Activated CD4-positive, alpha-beta T cell treated with anti-CD3 and anti-CD28 coated beads, Interleukin-2, amount 10 ng/mL, durations not matched to agents 24 days and 14 days (primary cell): ENCODE measurements at regions of chr10 and their contacts with region 1.

Region 1: DNA sequence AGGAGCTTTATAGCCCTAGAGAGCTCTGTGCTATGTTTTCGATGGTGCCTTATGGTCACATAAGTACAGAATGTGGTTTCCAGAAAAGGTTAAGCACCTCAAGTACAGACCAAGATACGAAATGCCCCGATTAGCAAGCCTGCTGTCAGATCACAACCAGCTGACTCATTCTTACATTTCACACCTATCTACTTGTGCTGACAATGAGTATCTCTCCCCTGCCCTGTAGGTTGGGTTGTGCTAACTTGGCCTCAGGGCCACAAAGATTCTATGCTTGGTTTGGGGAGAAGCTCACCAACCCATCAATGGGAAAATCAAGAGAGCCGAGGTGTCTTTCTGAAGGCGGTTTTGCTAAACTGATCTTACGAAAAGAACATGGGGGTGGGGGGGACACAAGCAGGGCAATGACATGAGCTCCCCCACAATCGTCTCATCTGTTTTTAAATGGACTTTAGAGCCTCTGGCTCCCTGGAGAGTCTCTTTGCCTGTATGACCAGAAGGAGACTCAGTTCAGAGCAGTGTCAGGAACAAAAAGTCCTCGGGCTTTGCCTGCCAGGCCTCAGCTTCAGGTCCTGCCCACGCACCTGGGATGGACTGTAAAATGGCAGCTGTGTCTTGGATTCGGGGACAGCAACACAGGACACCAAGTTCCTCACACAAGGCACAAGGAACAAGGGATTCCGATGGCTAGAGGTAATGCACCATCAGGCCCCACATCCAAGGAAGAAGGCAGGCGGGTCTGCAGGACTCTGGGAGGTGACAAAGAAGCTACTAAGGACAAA is 55.1 kb downstream of the FAM53B start:
- DNase-seq: peak; percentile 86
- H3K4me3 Mint-ChIP-seq: peak overlapping the region; percentile 66
- H3K27ac Mint-ChIP-seq: peak overlapping the region; percentile 91
- H3K4me1 Mint-ChIP-seq: peaks cover 58% of the 10 kb centered on the region
- H3K27me3 Mint-ChIP-seq: no peaks in the 10 kb centered on the region

Region 2: DNA sequence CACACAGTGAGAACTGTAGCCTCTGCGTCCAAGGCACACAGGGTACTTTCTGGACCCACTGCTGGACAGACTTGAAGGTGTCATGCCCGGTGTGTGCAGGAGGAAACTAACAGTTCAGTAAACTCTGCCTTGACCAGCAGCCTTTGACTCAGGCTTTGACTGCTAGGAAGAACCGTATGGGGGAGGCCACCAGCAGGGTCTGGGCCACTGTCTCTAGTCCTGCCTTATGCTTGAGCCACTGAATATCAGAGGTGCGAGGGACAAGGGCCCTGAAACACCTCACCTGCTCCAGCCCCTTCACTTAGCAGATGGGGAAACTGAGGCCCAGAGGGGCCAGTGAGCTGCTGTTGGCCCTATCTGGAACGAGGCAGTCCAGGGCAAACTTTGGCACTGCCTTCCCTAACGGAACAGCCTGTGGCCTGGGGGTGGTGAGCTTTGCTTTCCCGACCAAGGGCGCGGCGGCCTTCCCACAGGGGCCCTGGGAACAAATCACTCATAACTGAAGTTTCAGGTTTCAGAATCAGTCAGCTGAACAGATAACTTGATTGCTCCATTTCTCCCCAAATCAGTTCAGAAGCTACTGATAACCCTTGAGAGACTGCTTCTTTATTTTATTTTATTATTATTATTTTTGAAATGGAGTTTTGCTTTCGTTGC is 74.9 kb before region 1 on chr10:
- intact Hi-C with region 1: loop called (anchors 2 kb)
- DNase-seq: peak; percentile 79
- H3K4me3 Mint-ChIP-seq: no peak overlapping the region
- H3K27ac Mint-ChIP-seq: peak overlapping the region; percentile 25
- H3K4me1 Mint-ChIP-seq: peaks cover 32% of the 10 kb centered on the region
- H3K27me3 Mint-ChIP-seq: peaks cover 1% of the 10 kb centered on the region

Region 3: GRCh38 chr10:124626759-124627380 is 62.2 kb before region 1 on chr10:
- intact Hi-C with region 1: loop called (anchors 2 kb)
- DNase-seq: peak; percentile 82
- H3K4me3 Mint-ChIP-seq: peak overlapping the region; percentile 34
- H3K27ac Mint-ChIP-seq: peak overlapping the region; percentile 34
- H3K4me1 Mint-ChIP-seq: peaks cover 24% of the 10 kb centered on the region
- H3K27me3 Mint-ChIP-seq: peaks cover 7% of the 10 kb centered on the region

Region 4: DNA sequence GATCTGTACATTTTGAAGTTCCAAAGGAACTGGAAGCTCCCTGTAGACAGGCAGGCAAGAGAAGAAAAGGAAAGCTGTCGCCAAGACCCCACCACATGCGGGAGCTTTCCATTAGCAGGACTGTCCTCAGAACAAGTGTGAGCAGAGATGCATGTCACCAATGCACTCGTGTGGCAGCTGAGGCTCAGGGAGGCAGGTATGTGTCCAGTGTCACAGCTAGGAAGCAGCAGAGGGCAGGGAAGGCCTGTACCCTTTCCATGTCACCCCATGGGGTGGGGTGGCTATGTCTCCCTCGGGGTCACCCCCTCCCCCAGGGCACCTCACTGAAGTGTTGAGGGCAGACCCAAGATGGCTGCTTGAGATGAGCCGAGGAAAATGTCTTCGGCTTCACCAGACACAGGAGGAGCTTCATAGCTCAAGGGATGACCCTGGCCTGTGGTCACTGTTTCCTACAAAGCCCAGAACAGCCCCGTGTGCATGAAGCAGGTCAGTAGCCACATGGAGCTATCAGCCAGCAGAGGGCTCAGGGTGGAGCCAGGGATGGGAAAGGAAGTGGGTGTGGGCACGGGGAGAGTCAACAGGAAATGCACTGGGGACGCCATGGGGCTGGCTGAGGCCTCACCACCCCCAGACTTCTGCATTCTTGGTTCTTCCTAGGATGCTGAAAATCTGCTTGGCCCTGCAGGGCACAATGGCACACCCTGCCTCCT is 41.5 kb before region 1 on chr10:
- intact Hi-C with region 1: loop called (anchors 1 kb)
- DNase-seq: peak; percentile 92
- H3K4me3 Mint-ChIP-seq: peak overlapping the region; percentile 81
- H3K27ac Mint-ChIP-seq: peak overlapping the region; percentile 94
- H3K4me1 Mint-ChIP-seq: peaks cover 64% of the 10 kb centered on the region
- H3K27me3 Mint-ChIP-seq: no peaks in the 10 kb centered on the region

Region 5: DNA sequence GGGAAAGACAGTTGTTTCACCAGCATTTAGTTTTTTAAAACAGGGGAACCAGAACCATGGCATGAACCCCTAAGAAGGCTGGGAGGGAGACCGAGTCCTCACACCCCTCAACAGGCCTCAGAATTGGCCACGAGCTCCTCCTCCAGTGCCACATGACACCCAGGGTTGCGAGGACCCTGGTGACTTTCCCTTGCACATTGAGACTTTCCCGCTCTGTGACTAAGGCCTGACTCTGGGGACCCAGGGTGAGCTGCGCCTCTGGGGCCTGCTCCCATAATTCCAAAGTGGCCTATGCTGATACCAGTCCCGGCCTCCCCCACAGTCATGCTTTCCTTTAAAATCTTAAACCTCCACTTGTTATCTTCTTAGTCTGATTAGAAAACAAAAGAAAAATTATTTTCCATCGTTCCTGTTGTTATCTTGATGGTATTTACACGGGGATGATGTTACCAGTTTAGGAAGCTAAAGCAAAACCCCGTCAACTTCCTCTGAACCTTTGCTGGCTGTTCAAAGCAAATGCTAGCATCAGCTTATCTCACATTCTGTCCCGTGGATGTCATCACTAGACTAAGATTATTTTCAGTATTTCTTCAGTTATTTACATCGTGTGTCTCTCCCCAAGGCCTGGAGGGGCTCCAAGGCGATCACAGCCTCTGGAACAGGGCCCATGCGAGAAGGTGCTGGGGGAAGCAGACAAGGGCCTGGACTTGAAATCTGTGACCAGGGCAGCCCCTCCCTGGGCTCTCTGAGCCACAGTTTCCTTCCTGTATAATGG is 13.0 kb after region 1 on chr10:
- intact Hi-C with region 1: loop called (anchors 1 kb)
- DNase-seq: peak; percentile 72
- H3K4me3 Mint-ChIP-seq: peak overlapping the region; percentile 62
- H3K27ac Mint-ChIP-seq: peak overlapping the region; percentile 95
- H3K4me1 Mint-ChIP-seq: peaks cover 90% of the 10 kb centered on the region
- H3K27me3 Mint-ChIP-seq: no peaks in the 10 kb centered on the region

Region 6: GRCh38 chr10:124719213-124719851 is 30.3 kb after region 1 on chr10:
- intact Hi-C with region 1: loop called (anchors 1 kb)
- DNase-seq: peak; percentile 88
- H3K4me3 Mint-ChIP-seq: peak overlapping the region; percentile 43
- H3K27ac Mint-ChIP-seq: peak overlapping the region; percentile 78
- H3K4me1 Mint-ChIP-seq: peaks cover 78% of the 10 kb centered on the region
- H3K27me3 Mint-ChIP-seq: no peaks in the 10 kb centered on the region

Region 7: DNA sequence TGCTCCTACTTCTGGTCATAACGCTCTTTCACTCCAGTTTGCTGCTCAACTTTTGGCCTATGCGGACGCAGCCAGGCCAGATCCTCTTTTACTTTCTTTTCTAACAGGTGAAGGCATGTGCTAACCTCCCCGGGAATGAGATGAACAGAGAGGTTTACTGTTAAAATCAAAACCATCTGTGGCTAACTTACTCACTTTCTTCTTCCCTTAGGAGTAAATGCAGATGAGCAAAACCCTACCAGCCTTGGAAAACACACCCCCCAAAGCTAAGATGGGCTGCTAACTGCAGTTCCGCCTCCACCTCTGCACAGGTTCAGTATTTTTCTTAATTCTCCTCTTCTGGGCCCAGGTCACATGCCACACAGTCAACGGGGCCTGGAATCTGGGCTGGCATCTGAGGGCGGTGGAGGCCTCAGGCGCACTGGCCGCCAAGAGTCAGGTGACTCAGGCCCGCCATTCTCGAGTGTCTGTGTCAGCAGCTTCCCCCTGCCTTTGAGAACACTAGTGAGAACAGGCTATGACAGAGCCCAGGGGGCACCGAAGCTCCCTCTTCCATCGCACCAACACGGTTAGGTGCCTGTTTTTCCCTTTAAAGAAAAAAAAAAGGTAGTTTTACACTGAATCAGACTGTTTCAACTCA is 44.0 kb after region 1 on chr10:
- intact Hi-C with region 1: loop called (anchors 1 kb)
- DNase-seq: peak; percentile 80
- H3K4me3 Mint-ChIP-seq: peak overlapping the region; percentile 51
- H3K27ac Mint-ChIP-seq: peak overlapping the region; percentile 63
- H3K4me1 Mint-ChIP-seq: peaks cover 67% of the 10 kb centered on the region
- H3K27me3 Mint-ChIP-seq: no peaks in the 10 kb centered on the region